ENCODE measurements at regions of chr2 and their contacts with region 1.

Region 1: GRCh38 chr2:27683390-27684071 is 19.8 kb downstream of the SLC4A1AP start:
- DNase-seq: peak; percentile 96
- ATAC-seq: peak; percentile 95
- H3K4me3 Mint-ChIP-seq: peak overlapping the region; percentile 26
- H3K27ac Mint-ChIP-seq: peak overlapping the region; percentile 85
- H3K4me1 Mint-ChIP-seq: peaks cover 29% of the 10 kb centered on the region
- H3K27me3 Mint-ChIP-seq: no peaks in the 10 kb centered on the region

Region 2: DNA sequence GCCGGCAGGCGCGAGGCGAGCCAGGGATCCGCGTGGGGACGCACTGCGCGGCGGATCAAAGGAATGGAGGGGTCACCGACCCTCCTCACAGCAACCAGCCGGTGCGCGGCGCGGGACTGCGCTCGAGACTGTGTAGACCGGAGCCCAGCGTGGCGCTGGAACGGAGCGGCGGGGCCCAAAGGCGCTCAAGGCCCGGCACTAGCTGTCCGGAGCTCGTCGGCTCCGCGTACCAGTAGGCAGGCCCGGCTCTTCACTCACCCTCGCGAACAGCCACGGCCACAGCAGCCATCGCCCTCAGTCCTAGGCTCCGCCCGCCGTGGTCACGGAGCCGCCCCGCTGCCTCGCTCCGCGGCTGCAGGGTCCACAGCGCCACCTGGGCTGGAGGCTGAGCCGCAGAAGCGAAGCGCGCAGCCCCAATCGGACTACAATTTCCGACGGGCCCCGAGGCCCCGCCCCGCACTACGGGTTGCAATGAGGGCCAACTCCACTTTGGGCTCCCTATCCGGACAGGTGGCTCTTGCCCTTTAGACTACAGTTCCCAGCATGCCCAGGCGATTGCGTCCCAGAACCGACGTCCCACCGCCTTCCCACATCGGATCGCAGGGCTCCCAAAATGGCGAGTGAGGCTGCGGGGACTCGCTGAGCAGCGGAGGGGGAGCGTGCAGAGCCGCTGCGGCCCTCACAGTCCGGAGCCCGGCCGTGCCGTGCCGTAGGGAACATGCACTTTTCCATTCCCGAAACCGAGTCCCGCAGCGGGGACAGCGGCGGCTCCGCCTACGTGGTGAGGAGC is 313.3 kb before region 1 on chr2 and contains the starts of genes EIF2B4 and SNX17:
- CTCF ChIA-PET with region 1: interaction called, 16 read pairs
- POLR2A ChIA-PET with region 1: no interaction called
- DNase-seq: peak; percentile 99
- ATAC-seq: peak; percentile 95
- H3K4me3 Mint-ChIP-seq: peak within 1 kb of the TSS; percentile 98
- H3K27ac Mint-ChIP-seq: peak within 1 kb of the TSS; percentile 95
- H3K4me1 Mint-ChIP-seq: peaks cover 49% of the 10 kb centered on the region
- H3K27me3 Mint-ChIP-seq: no peaks in the 10 kb centered on the region
- total RNA-seq, gene EIF2B4: 34.5 to 37.0 TPM
- total RNA-seq, gene SNX17: 119 to 120 TPM

Region 3: GRCh38 chr2:27428213-27428977 is 255.1 kb before region 1 on chr2 and contains the start of gene NRBP1:
- CTCF ChIA-PET with region 1: interaction called, 34 read pairs
- POLR2A ChIA-PET with region 1: no interaction called
- DNase-seq: peak; percentile 93
- ATAC-seq: peak; percentile 92
- H3K4me3 Mint-ChIP-seq: peak within 1 kb of the TSS; percentile 99
- H3K27ac Mint-ChIP-seq: peak within 1 kb of the TSS; percentile 98
- H3K4me1 Mint-ChIP-seq: peaks cover 31% of the 10 kb centered on the region
- H3K27me3 Mint-ChIP-seq: no peaks in the 10 kb centered on the region
- total RNA-seq, gene NRBP1: 91.2 to 91.3 TPM

Region 4: GRCh38 chr2:27628767-27629709 is 54.5 kb before region 1 on chr2 and contains the starts of genes CCDC121 and GPN1:
- CTCF ChIA-PET with region 1: interaction called, 27 read pairs
- POLR2A ChIA-PET with region 1: no interaction called
- DNase-seq: peak; percentile 98
- ATAC-seq: peak; percentile 98
- H3K4me3 Mint-ChIP-seq: no peak within 1 kb of the TSS
- H3K27ac Mint-ChIP-seq: peak within 1 kb of the TSS; percentile 26
- H3K4me1 Mint-ChIP-seq: peaks cover 36% of the 10 kb centered on the region
- H3K27me3 Mint-ChIP-seq: no peaks in the 10 kb centered on the region
- total RNA-seq, gene CCDC121: 1.5 to 1.6 TPM
- total RNA-seq, gene GPN1: 39.7 to 41.4 TPM

Region 5: DNA sequence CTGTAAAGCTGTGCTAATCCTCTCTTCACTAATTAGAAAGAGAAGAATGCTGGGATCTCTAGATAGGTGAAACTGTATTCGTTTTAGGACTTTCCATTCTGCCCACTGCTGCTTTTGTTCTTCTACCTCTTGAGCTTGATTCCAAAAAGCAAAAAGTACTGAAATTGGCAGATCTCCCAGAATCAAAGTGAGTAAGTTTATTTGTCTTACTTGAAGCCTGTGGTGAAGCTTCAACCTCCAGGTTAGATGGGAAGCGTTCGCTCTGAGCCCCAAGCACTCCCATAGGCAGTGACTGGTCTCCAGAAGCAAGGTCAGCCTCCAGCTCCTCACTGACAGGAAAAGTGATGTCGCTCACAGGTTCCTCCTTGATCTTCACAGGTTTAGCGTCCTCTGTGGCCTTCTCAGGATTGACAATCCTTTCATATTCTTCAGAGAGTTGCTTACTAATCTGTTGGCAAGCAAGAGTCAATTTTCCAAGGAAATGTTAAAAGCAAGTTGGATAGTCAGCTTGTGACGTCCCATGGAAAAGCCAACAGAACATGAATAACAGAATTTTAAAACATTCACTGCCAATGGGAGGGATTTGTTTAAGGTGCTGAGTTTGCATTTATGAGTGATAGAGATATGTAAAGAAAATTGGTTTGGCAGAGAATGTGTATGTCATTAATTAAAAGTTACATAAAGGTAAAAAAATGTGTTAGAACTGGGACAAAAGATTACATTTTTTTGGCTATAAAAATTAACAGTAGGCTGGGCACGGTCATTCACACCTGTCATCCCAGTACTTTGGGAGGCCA is 28.2 kb before region 1 on chr2:
- CTCF ChIA-PET with region 1: interaction called, 13 read pairs
- POLR2A ChIA-PET with region 1: interaction called, 3 read pairs
- DNase-seq: no peak
- ATAC-seq: no peak
- H3K4me3 Mint-ChIP-seq: no peak overlapping the region
- H3K27ac Mint-ChIP-seq: no peak overlapping the region
- H3K4me1 Mint-ChIP-seq: peaks cover 6% of the 10 kb centered on the region
- H3K27me3 Mint-ChIP-seq: no peaks in the 10 kb centered on the region

Region 6: DNA sequence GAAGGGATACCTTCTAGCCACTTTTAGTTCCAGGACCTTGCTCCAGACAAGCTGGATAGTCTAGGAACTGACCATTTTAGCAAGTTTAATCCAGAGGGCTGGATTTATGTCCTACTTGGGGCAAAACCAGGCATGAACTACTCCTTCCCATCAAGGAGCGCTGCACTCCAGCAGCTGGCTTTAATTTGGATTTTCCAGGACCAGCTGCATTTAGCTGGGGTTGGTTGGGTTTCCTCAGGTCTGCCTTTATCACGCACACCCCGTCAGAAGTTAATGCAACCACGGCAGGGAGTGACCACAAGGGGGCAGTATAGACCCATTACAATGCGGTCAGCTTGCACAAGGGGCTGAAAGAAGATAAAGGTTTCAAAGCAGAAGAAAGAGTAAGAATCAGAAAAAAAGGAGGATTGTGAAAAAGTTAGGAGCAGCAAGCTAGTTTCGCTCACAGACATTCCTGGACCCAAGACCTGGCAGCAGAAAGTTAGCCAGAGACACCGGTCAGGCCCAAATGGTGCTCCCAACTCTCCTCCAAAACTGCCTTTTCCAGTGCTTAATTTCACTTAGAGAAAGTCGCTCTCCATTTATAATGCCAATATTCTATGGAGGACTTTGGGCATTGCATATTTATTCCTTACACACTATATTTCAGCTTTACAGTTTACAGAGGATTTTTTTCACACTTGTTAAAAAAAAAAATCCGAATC is 20.3 kb after region 1 on chr2:
- CTCF ChIA-PET with region 1: interaction called, 40 read pairs
- POLR2A ChIA-PET with region 1: no interaction called
- DNase-seq: peak; percentile 92
- ATAC-seq: peak; percentile 89
- H3K4me3 Mint-ChIP-seq: no peak overlapping the region
- H3K27ac Mint-ChIP-seq: no peak overlapping the region
- H3K4me1 Mint-ChIP-seq: peaks cover 15% of the 10 kb centered on the region
- H3K27me3 Mint-ChIP-seq: no peaks in the 10 kb centered on the region

Region 7: DNA sequence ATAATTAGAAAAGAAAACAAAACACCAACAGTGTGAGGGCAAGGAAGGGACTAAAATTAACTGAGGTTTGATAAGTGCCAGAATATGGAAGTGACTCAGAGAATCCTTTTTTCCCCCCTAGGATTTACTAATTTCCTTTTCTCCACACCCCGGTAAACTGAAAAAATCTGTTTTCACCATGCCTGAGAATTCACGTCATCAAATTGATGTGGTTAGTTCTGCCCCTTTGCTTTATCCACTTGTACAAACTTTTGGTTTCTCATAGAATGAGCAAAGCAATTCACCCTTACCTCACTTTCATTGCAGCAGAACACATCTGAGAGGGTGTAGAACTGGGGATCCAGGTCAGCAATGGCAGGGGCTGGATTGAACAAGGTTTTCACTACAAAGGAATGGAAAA is 148.9 kb after region 1 on chr2:
- CTCF ChIA-PET with region 1: no interaction called
- POLR2A ChIA-PET with region 1: no interaction called
- DNase-seq: no peak
- ATAC-seq: no peak
- H3K4me3 Mint-ChIP-seq: no peak overlapping the region
- H3K27ac Mint-ChIP-seq: no peak overlapping the region
- H3K4me1 Mint-ChIP-seq: no peaks in the 10 kb centered on the region
- H3K27me3 Mint-ChIP-seq: no peaks in the 10 kb centered on the region